ENCODE measurements at regions of chr5 and their contacts with region 1.

Region 1: DNA sequence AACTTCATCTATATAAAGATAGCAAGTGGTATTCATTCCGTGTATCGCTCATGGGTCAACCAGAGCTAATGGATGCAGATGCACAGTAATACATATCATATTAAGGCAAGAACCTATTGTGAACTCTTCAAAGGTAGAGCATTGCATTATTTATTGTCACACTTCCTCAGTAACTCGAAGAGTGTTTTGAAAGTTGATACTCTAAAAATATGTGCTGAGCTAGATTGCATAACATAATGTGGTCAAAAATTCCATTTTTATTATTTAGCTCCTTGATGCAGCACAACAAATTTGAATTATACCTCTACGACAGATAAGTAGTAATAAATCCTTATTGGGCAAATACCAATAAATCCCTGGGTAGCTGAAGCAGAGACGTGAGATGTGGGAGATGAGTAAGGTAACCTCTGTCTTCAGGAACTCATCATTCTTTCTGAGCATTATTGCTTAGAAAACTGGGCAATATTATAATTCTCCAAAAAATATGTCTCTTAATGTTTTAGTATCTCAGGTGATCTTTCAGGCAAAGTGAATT is 70.3 kb downstream of the CDH18 start:
- DNase-seq: no peak
- ATAC-seq: no peak
- H3K4me3 ChIP-seq: no peak overlapping the region
- H3K27ac ChIP-seq: no peak overlapping the region
- H3K4me1 ChIP-seq: no peaks in the 10 kb centered on the region
- H3K27me3 ChIP-seq: no peaks in the 10 kb centered on the region
- CTCF ChIP-seq: no peak
- POLR2A ChIP-seq: no peak

Region 2: DNA sequence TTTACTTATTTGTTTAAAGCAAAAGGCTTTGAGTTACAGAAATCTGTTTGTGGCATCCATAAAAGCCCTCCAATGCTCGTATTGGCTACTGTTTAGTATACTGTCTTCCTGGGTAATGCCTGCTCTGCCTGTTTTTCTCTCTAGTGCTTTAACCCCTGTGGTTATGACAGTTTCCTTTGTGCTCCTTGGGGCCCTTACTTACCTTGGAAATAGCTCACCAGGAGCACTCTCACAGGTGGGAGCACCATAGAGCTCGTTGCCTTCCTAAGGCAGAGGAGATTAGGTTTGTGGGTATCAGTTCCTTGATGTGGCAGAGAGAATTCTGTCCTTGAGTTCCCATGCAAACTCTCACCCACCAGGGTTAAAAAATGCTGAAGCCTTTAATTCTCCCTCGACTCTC is 172.4 kb before region 1 on chr5:
- in situ Hi-C with region 1: no loop called
- intact Hi-C with region 1: loop called (anchors 5 kb)
- DNase-seq: no peak
- ATAC-seq: no peak
- H3K4me3 ChIP-seq: no peak overlapping the region
- H3K27ac ChIP-seq: no peak overlapping the region
- H3K4me1 ChIP-seq: no peaks in the 10 kb centered on the region
- H3K27me3 ChIP-seq: no peaks in the 10 kb centered on the region
- CTCF ChIP-seq: no peak
- POLR2A ChIP-seq: no peak

Measured in gastrocnemius medialis (tissue), 4 donors.